Right ventricle myocardium inferior (tissue), 1 donor: ENCODE measurements at regions of chr16 and their contacts with region 1.

Region 1: DNA sequence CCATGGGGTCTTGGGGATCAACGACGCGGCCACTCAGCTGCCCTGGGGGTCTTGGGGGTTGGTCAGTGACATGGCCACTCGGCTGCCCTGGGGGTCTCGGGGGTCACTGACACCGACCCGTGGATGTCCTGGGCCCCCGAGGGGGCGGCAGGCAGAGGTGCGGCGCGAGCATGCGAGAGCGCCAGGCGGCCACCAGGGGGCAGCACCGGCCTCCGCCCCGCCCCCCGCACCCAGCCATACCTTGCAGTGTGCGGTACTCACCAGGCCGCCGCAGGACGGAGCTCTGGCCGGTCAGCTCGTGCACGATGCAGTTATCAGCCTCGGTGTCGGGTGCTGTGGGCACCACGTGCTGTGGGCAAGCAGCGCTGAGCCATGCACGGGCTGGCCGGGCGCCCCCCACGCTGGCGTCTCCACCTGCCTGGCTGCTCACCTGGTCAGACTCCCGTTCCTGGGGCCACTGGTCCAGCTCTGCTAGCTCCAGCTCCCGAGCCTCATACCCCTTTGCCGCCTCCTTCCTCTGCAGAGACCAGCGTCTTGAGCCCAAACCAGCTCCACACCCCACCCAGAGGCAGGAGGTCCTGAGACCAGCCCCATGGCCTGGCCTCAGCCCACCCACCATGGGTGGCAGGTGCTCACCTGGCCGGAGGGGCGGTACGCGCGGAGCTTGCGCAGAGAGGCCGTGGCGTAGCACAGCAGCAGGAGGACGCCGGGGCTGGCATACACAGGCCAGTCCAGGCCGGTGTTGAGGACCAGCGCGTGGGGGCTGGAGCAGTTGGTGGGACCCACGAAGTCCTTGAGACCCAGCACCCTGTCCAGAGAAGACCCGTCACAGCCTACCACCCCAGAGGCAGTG is 31.2 kb downstream of the CTU2 start:
- DNase-seq: peak; percentile 93
- ATAC-seq: peak; percentile 79

Region 2: GRCh38 chr16:88662843-88663606 is 74.5 kb before region 1 on chr16 and contains the start of gene MVD:
- intact Hi-C with region 1: no loop called
- DNase-seq: peak; percentile 98
- ATAC-seq: peak; percentile 99
- total RNA-seq, gene MVD: 24.0 TPM

Region 3: DNA sequence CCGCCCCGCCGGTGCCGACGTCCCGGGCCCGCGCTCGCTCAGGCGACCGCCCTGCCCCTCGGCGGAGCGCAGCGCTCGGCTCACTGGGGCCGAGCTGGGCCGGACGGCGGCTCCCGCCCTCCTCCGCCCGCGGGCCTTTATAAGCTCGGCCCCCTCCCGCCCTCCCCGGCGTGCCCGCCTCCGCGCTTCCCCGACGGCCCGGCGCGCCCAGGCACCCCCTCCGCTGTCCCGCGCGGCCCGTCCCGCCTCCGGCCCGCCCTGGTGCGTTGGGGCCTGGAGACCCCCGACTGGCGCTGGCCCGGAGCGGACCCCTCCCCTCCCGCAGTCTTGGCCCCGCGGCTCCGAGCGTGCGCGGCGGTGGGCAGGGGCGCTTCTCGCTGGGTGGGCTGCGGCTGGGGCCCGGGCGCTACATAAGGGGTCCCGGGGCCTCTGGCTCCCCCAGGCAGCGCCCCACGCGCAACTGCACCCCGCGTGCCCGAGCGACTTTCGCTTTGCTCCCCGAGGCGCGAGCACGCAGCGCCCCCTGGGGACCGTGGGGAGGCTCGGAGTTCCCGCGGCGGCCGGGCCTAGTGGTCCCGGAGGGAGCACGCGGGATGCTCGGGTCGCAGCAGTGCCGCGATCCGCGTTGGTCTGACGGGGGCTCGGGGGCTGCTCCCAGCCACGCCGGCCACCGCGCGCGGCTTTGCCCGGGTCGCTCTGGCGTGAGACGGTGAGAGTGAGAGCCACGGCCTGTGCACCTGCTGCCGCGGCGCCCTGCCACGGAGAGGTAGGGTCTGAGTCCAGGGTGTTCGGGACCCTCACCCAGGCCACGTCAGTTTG is 47.8 kb after region 1 on chr16 and contains the start of gene PIEZO1:
- intact Hi-C with region 1: loop called (anchors 1 kb)
- DNase-seq: peak; percentile 91
- ATAC-seq: peak; percentile 62
- total RNA-seq, gene PIEZO1: 18.1 TPM

Region 4: DNA sequence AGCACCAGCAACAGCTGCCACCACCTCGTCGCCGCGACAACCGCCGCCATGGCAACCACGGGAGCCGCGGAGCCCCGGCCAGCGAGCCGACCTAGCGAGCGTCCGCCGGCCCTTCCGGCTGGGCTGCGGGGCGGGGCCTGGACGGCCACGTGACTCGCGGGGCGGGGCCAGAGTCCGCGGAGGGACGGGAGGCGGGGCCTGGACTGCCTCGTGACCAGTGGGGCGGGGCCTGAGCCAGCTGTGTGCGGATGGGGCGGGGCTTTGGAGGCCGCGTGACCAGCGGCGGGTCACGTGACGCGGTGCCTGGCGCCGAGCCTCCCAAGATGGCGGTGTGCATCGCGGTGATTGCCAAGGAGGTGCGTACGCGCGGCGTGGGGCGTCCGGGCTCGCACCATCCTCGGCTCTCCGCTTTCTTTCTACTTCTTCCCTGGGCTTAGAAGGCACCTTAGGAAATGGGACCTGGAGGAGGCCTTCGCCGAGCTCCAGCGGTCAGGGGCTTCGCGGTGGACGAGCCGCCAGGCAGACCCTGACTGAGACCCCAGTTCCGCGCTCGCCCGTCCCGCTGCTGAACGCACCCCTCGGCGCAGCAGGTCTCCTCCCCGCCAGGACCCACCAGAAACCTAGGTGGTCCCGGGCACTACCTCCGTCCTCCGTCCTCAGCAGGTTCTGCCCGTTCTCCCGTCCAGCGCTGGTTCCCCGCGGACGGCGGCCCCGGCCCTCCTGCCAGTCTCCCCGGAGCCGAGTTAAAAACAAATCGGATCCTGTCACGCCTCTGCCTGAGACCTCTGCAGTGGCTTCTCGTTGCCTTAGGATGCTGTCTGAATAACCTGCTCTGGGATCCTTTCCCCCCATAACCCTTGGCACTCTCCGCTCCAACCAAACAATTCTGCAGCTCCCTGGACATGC is 119.6 kb after region 1 on chr16 and contains the starts of genes GALNS and TRAPPC2L:
- intact Hi-C with region 1: loop called (anchors 5 kb)
- DNase-seq: peak; percentile 100
- ATAC-seq: peak; percentile 98
- total RNA-seq, gene GALNS: 15.8 TPM
- total RNA-seq, gene TRAPPC2L: 58.7 TPM

Region 5: DNA sequence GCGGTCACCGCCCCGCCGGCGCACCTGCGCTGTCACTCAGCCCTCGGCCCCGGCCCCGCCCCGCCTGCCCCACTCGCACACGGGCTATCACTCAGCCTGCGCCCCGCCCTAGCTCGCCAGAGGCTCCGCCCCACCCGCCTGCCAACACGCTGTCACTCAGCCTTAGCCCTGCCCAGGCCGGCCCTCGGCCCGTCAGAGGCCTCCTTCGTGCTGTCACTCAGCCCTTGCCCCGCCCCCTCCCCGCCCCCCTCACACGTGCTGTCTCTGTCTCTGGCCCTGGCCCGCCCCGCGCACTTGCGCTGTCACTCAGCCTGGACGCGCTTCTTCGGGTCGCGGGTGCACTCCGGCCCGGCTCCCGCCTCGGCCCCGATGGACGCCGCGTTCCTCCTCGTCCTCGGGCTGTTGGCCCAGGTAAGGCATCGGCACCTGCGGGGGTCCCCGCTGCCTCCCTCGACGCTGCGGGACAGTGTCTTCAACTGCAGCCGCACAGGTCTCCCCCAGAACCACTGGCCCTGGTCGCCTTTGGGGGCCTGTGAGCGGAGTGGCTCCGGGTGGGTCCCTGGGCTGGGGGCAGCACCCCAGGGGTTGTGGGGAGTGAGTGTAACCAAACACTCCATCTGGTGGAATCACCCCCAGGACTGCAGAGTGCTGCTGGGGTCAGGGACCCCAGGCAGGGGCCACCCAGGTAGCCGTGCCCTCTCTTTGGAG is 434.1 kb after region 1 on chr16 and contains the start of gene CDH15:
- intact Hi-C with region 1: loop called (anchors 5 kb)
- DNase-seq: peak; percentile 95
- ATAC-seq: peak; percentile 94
- total RNA-seq, gene CDH15: not detected